IMR-90 (cell line): ENCODE measurements at regions of chr1 and their contacts with region 1.

Region 1: DNA sequence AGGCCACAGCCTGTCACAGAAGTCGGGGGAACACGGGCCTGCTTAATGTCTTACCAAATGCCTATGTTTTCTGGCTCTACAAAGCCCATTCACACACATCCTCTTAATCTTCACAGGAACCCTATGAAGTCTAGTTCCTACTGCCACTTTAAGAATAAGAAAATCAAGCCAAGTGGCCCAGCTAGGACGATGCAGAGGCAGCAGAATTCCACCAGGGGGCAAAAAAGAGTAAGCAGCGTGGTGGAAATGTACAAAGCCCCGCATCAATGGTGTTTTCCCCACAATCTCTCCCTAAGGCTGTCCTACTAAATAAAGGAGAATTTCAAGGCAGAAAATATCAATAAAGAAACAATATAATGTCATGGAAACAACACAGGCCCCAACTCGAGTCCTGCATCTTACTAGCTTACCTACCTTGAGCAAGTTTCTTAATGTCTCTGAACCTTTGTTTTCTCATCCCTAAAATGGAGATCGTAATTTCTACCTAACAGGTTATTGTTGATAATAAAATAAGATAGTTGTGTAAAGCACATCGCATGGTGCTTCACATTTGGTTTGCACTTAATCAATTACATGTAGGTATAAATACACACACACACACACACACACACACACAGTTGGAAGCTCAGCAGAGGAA is 21.4 kb downstream of the SEC16B start:
- DNase-seq: peak; percentile 65
- ATAC-seq: peak; percentile 83
- H3K4me3 ChIP-seq: no peak overlapping the region
- H3K27ac ChIP-seq: no peak overlapping the region
- H3K4me1 ChIP-seq: no peaks in the 10 kb centered on the region; the same call in 1 of the 2 replicates
- H3K27me3 ChIP-seq: no peaks in the 10 kb centered on the region
- CTCF ChIP-seq: peak; percentile 93
- POLR2A ChIP-seq: no peak
- RAD21 ChIP-seq: peak; percentile 73

Region 2: DNA sequence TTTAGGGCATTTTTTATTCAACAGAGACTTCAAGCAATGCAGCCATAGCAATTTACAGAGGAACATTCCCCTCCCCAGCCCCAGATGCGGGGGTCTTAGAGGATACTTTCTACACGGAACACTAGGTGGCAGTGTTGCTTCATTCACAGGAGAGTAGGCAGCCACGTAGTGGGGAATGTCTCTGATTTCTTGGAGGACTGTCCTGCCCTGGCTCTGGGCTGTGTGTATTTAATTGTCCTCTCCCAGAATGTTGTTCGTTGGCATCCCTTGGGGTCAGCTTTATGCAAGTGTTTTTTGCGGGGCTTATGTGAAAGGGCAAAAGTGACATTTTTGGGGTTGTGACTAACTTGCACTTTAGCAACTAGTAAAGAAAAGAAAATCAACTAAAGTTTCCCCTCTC is 1388.6 kb before region 1 on chr1:
- CTCF ChIA-PET with region 1: no interaction called
- POLR2A ChIA-PET with region 1: no interaction called
- dilution Hi-C with region 1: no loop called
- in situ Hi-C with region 1: no loop called
- intact Hi-C with region 1: loop called (anchors 10 kb)
- DNase-seq: peak; percentile 53
- ATAC-seq: peak; percentile 79
- H3K4me3 ChIP-seq: no peak overlapping the region
- H3K27ac ChIP-seq: no peak overlapping the region
- H3K4me1 ChIP-seq: no peaks in the 10 kb centered on the region
- H3K27me3 ChIP-seq: no peaks in the 10 kb centered on the region
- CTCF ChIP-seq: peak; percentile 74
- POLR2A ChIP-seq: no peak
- RAD21 ChIP-seq: peak; percentile 81

Region 3: GRCh38 chr1:177181631-177182291 is 766.7 kb before region 1 on chr1:
- CTCF ChIA-PET with region 1: no interaction called
- POLR2A ChIA-PET with region 1: no interaction called
- dilution Hi-C with region 1: no loop called
- in situ Hi-C with region 1: no loop called
- intact Hi-C with region 1: loop called (anchors 10 kb)
- DNase-seq: peak; percentile 29
- ATAC-seq: peak; percentile 99
- H3K4me3 ChIP-seq: 0 out of 2 replicates have a peak overlapping the region, but pooled peaks have one; percentile 9
- H3K27ac ChIP-seq: no peak overlapping the region
- H3K4me1 ChIP-seq: no peaks in the 10 kb centered on the region
- H3K27me3 ChIP-seq: peaks cover 15% of the 10 kb centered on the region
- CTCF ChIP-seq: peak; percentile 69
- POLR2A ChIP-seq: no peak
- RAD21 ChIP-seq: peak; percentile 57

Region 4: DNA sequence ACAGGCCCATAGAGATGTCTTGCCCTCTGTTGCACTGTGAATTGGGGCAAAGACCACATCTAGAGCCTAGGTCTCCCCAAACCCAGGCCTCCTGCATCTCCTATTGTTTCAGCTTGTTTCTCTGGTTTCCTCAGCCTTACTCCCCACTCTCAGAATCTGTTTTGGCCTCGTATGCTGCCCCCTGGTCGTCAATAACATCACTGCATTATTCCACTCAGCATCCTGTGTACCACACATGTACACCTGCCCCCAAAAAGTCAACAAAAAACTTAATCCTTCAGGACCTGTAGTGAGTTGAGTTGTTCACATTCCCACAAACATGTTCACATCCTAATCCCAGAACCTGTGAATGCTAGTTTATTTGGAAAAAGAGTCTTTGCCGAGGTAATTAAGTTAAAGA is 592.9 kb before region 1 on chr1:
- CTCF ChIA-PET with region 1: no interaction called
- POLR2A ChIA-PET with region 1: no interaction called
- dilution Hi-C with region 1: no loop called
- in situ Hi-C with region 1: no loop called
- intact Hi-C with region 1: loop called (anchors 2 kb)
- DNase-seq: peak; percentile 19
- ATAC-seq: peak; percentile 79
- H3K4me3 ChIP-seq: no peak overlapping the region
- H3K27ac ChIP-seq: no peak overlapping the region
- H3K4me1 ChIP-seq: no peaks in the 10 kb centered on the region
- H3K27me3 ChIP-seq: peaks cover 2% of the 10 kb centered on the region; the same call in 1 of the 2 replicates
- CTCF ChIP-seq: peak; percentile 48
- POLR2A ChIP-seq: no peak
- RAD21 ChIP-seq: peak; percentile 54

Region 5: GRCh38 chr1:177429263-177429662 is 519.2 kb before region 1 on chr1:
- CTCF ChIA-PET with region 1: no interaction called
- POLR2A ChIA-PET with region 1: no interaction called
- dilution Hi-C with region 1: no loop called
- in situ Hi-C with region 1: no loop called
- intact Hi-C with region 1: no loop called
- DNase-seq: no peak
- ATAC-seq: no peak
- H3K4me3 ChIP-seq: no peak overlapping the region
- H3K27ac ChIP-seq: no peak overlapping the region
- H3K4me1 ChIP-seq: no peaks in the 10 kb centered on the region
- H3K27me3 ChIP-seq: no peaks in the 10 kb centered on the region
- CTCF ChIP-seq: no peak
- POLR2A ChIP-seq: no peak
- RAD21 ChIP-seq: no peak

Region 6: DNA sequence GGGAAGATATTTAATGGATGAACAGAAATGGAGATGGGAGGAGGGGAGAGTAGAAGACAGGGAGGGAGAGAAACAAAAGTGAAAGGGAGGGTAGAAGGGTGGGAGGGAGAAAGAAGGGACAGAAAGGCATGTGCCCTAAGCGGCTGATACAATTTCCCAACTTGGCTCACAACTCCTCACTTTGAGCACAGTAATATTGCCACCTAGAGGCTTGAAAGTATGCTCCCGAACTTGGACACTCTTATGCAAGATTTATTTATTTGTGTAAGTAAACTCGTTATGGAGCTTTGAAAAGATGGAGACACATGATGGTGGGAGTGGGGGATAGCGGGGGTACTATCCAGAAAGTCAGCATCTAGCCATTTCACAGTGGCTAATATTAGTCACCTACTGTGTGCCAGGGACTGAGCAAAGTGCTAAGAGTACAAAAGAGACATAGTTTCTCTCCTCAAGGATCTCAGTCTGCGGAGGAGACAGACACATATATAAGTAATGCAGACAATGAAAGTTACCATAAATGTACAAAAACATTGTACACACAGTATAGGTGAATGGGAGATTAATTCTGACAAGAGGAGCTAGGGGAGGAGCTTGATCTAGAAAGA is 168.3 kb before region 1 on chr1:
- CTCF ChIA-PET with region 1: no interaction called
- POLR2A ChIA-PET with region 1: no interaction called
- dilution Hi-C with region 1: no loop called
- in situ Hi-C with region 1: no loop called
- intact Hi-C with region 1: loop called (anchors 5 kb)
- DNase-seq: peak; percentile 57
- ATAC-seq: peak; percentile 74
- H3K4me3 ChIP-seq: no peak overlapping the region
- H3K27ac ChIP-seq: no peak overlapping the region
- H3K4me1 ChIP-seq: no peaks in the 10 kb centered on the region
- H3K27me3 ChIP-seq: no peaks in the 10 kb centered on the region
- CTCF ChIP-seq: peak; percentile 48
- POLR2A ChIP-seq: no peak
- RAD21 ChIP-seq: peak; percentile 47

Region 7: GRCh38 chr1:178282949-178283367 is 334.5 kb after region 1 on chr1:
- CTCF ChIA-PET with region 1: interaction called, 3 read pairs
- POLR2A ChIA-PET with region 1: no interaction called
- dilution Hi-C with region 1: no loop called
- in situ Hi-C with region 1: no loop called
- intact Hi-C with region 1: loop called (anchors 2 kb)
- DNase-seq: peak; percentile 86
- ATAC-seq: peak; percentile 91
- H3K4me3 ChIP-seq: no peak overlapping the region
- H3K27ac ChIP-seq: no peak overlapping the region
- H3K4me1 ChIP-seq: peaks cover 13% of the 10 kb centered on the region
- H3K27me3 ChIP-seq: no peaks in the 10 kb centered on the region
- CTCF ChIP-seq: peak; percentile 70
- POLR2A ChIP-seq: no peak
- RAD21 ChIP-seq: peak; percentile 75